A549 (cell line): ENCODE measurements at regions of chr9 and their contacts with region 1.

Region 1: DNA sequence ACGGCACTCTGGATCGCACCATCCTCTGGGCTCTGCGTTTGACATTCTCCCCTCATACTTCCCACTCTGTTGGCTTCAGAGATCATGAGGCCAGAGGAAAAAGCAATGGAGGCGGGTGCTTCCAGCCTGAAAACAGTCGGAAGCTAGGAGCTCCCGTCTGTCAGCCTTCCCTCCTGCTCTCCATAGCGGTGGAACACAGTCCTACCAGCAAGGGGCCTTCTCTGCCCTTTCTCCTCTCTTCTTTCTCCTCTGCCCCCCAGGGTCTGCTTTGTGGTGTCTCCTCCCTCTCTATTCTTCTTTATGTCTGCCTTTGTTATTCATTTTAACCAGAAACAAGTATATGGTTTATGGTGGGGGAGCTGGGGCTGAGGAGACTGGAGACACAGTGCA is 152.5 kb upstream of the NFIB start:
- DNase-seq: no peak
- ATAC-seq: peak in 1 of 2 experiments; percentile 14; a peak in 1 of 6 replicates
- H3K4me3 ChIP-seq: no peak overlapping the region
- H3K27ac ChIP-seq: no peak overlapping the region
- H3K4me1 ChIP-seq: peaks cover 9% of the 10 kb centered on the region; the same call in 2 of the 3 replicates
- CTCF ChIP-seq: no peak
- EP300 ChIP-seq: no peak
- POLR2A ChIP-seq: no peak
- RAD21 ChIP-seq: no peak

Region 2: DNA sequence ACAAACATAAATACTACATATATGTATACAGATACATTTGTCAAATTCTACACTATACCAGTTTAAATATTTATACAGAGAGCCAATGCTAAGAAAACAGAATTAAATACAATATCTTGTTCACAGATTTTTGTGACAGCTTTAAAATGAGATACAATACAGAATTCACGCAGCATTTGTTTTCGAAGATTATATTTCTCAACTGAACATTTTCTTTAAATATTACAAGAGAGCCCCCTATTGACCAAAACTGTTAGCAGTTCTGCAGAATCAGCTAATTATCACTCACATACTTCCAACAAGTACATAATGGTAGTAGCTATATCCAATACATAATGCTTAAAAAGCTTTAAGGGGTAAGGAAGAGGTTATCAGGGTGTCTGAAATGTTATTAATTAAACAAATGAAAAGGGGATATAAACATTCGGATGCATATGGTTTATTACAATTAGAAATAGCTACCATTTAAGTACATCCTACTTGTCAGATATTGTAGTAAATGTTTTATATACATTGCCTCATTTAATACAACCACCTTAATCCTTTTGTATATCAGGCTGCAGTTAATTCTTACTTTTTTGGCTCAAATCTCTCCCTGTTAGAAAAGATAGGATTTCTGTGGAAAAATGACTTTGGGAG is 195.1 kb after region 1 on chr9:
- CTCF ChIA-PET with region 1: interaction called, 19 read pairs
- POLR2A ChIA-PET with region 1: no interaction called
- DNase-seq: peak in 1 of 2 experiments; percentile 38
- ATAC-seq: peak; percentile 62 to 63; a peak in 2 of 6 replicates
- H3K4me3 ChIP-seq: no peak overlapping the region
- H3K27ac ChIP-seq: no peak overlapping the region
- H3K4me1 ChIP-seq: no peaks in the 10 kb centered on the region
- CTCF ChIP-seq: peak; percentile 82
- EP300 ChIP-seq: no peak
- POLR2A ChIP-seq: no peak
- RAD21 ChIP-seq: peak; percentile 67 to 77